ENCODE measurements at regions of chr19 and their contacts with region 1.

Region 1: GRCh38 chr19:36114763-36115452 is at the start of gene POLR2I:
- DNase-seq: peak; percentile 99
- H3K4me3 Mint-ChIP-seq: peak within 1 kb of the TSS; percentile 99
- H3K27ac Mint-ChIP-seq: peak within 1 kb of the TSS; percentile 94
- H3K4me1 Mint-ChIP-seq: peaks cover 36% of the 10 kb centered on the region
- H3K27me3 Mint-ChIP-seq: peaks cover 5% of the 10 kb centered on the region
- total RNA-seq, gene POLR2I: 84.1 to 84.8 TPM

Region 2: DNA sequence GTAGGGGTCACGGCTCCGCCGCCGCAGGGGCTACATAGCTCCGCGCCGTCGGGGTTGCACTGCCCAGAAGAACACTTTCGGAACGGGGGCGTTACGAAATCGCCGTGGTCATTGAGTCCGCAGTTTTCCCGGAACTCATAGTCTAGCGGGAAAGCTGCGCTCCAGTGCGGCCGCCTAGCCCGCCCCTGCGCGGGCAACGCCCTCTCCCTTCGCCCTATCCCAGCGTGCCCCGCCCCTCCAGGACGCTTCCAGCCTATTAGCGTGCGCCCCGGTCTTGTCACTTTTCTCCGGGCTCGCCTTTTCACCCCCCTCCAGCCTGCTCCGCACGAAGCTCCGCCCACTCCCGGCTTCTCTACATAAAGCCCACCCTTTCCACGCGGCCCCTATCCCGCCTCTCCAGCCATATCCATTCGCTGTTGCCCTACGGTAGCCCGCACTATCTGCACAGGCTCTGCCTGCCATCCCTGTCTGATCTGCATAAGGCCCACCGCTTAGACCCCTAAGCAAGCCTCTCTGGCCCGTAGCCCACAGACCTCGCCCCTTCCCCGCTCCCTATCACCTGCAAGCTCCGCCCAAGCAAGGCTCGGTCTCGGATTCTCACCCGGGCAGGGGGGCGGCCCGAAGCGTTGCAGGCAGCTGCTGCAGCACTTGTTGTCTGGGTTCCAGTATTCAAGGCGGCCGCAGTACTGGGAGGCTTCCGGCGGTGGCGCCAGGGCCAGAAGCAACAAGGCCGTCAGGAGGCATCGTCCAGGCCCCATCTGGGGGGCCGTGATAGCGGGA is 374.3 kb before region 1 on chr19:
- CTCF ChIA-PET with region 1: no interaction called
- POLR2A ChIA-PET with region 1: no interaction called
- intact Hi-C with region 1: loop called (anchors 10 kb)
- DNase-seq: peak; percentile 98
- H3K4me3 Mint-ChIP-seq: peak overlapping the region; percentile 89
- H3K27ac Mint-ChIP-seq: peak overlapping the region; percentile 90
- H3K4me1 Mint-ChIP-seq: peaks cover 31% of the 10 kb centered on the region
- H3K27me3 Mint-ChIP-seq: no peaks in the 10 kb centered on the region

Region 3: DNA sequence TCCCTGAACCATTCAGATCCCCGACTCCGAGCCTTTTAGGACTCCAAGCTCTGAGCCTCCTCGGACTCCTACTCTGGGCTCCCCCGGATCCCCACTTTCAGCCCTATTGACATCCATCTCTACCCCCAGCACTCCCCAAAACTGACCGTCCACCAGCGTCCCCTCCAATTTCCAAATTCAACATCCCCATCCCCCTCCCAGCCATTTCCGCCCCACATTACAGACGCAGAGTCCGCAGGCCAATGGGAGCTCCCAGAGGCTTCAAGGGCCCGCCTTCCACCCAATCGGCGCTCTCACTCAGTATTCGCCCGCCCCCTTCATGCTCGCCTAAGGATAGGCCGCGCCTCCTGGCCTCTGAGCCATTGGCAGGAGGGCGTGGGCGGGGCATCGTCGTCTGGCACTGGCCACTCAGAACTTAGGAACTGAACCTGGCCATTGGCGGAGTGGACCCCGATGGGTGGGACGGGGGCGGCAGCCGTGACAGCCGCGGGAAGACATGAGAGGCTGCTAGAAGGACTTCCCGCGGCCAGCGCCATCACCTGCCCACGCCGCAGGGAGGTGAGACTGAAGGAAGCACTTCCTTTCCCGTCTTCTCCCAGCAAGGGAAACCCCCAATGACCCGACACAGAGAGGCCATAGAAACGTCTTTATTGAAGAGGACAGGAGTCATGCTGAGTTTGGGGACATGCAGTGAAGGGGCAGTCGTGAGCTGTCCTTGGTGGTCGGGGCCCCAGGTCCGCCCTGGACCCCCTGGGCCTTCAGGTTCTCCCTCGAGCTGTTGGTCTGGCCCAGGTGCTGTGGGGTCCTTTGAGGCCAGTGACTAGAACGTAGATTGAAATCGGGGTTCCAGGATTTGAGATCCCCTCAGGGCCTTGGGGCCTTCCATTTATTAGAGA is 100.6 kb before region 1 on chr19 and contains the start of gene ALKBH6:
- CTCF ChIA-PET with region 1: no interaction called
- POLR2A ChIA-PET with region 1: interaction called, 4 read pairs
- intact Hi-C with region 1: loop called (anchors 1 kb)
- DNase-seq: peak; percentile 100
- H3K4me3 Mint-ChIP-seq: peak within 1 kb of the TSS; percentile 99
- H3K27ac Mint-ChIP-seq: peak within 1 kb of the TSS; percentile 95
- H3K4me1 Mint-ChIP-seq: peaks cover 36% of the 10 kb centered on the region
- H3K27me3 Mint-ChIP-seq: no peaks in the 10 kb centered on the region
- total RNA-seq, gene ALKBH6: 40.9 to 44.7 TPM

Region 4: GRCh38 chr19:36132489-36132891 is 17.6 kb after region 1 on chr19:
- CTCF ChIA-PET with region 1: interaction called, 22 read pairs
- POLR2A ChIA-PET with region 1: interaction called, 13 read pairs
- intact Hi-C with region 1: loop called (anchors 1 kb)
- DNase-seq: peak; percentile 72
- H3K4me3 Mint-ChIP-seq: no peak overlapping the region
- H3K27ac Mint-ChIP-seq: peak overlapping the region; percentile 86
- H3K4me1 Mint-ChIP-seq: peaks cover 34% of the 10 kb centered on the region
- H3K27me3 Mint-ChIP-seq: no peaks in the 10 kb centered on the region

Region 5: DNA sequence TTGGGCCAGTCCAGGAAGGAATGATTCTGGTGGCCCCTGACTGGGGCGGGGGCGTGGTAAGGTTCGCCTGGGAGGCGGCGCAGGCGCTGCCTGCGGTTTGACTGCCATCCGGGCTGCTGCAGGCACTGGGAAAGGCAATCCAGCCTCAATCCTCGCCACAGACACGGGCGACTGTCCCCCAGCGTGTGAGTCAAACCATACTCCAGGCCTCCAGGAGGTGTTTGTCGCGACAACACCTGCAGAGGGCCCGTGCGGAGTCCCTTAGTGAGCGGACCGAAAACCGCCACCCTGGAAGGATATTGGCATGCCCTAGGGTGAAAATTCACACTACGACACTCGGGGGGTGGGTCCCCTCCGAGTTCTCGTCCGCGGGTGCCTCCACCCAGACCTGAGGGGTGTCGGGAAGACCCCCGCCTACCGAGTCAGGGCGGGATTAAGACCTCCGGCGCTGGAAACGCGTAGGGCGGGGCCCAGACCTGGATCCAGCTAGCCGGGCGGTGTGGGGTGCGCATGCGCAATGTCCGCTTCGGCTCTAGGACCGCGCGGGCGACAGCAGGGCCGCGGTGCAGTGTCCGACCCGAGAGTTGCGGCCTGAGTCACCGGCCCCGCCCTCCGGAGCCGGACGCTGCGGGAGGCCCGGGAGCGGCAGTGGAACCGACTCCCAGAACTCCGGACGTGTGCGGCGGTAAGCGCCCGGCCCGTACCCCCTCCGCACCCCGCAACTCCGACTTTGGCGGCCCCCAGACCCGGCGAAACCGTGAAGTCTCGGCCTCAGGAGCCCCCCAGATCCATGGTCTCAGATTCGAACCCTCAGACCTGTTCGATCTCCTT is 24.8 kb after region 1 on chr19 and contains the start of gene CAPNS1:
- CTCF ChIA-PET with region 1: interaction called, 3 read pairs
- POLR2A ChIA-PET with region 1: interaction called, 4 read pairs
- intact Hi-C with region 1: loop called (anchors 1 kb)
- DNase-seq: peak; percentile 96
- H3K4me3 Mint-ChIP-seq: peak within 1 kb of the TSS; percentile 92
- H3K27ac Mint-ChIP-seq: peak within 1 kb of the TSS; percentile 97
- H3K4me1 Mint-ChIP-seq: peaks cover 26% of the 10 kb centered on the region
- H3K27me3 Mint-ChIP-seq: no peaks in the 10 kb centered on the region
- total RNA-seq, gene CAPNS1: 430 to 447 TPM

Region 6: DNA sequence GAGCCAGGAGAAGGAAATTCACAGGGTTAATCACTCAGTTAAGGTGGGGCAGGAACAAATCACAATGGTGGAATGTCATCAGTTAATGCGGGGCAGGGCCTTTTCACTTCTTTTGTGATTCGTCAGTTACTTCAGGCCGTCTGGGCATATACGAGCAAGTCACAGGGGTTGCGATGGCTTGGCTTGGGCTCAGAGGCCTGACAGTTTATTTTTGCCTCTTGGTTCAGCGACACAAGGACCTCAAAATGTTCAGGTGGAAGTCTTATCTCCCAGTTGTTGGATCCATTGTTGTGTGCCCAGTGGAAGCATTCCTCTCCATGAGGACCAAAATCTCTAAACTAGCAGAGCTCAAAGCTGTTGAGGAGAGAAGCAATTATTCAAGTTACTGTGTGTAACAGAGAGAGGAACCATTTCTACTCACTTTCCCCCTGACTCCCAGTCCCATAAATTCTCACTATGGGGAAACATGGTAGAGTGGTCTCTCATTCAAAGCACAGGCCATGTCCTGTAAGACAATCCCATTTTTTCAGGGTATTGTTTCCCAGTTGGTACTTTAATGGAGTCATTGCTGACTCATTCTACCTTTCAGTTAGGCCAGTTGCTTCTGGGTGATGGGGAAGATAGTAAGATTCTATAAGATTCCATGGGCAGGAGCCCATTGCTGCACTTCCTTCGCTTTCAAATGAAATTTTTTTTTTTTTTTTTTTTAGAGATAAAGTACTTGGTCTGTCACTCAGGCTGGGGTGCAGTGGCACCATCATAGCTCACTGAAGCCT is 46.1 kb after region 1 on chr19:
- CTCF ChIA-PET with region 1: no interaction called
- POLR2A ChIA-PET with region 1: no interaction called
- intact Hi-C with region 1: no loop called
- DNase-seq: no peak
- H3K4me3 Mint-ChIP-seq: no peak overlapping the region
- H3K27ac Mint-ChIP-seq: no peak overlapping the region
- H3K4me1 Mint-ChIP-seq: peaks cover 2% of the 10 kb centered on the region
- H3K27me3 Mint-ChIP-seq: no peaks in the 10 kb centered on the region